Activated CD4-positive, alpha-beta memory T cell treated with anti-CD3 and anti-CD28 coated beads, Interleukin-2, amount 10 ng/mL, durations not matched to agents 7 days and 5 days (primary cell): ENCODE measurements at regions of chr16 and their contacts with region 1.

Region 1: DNA sequence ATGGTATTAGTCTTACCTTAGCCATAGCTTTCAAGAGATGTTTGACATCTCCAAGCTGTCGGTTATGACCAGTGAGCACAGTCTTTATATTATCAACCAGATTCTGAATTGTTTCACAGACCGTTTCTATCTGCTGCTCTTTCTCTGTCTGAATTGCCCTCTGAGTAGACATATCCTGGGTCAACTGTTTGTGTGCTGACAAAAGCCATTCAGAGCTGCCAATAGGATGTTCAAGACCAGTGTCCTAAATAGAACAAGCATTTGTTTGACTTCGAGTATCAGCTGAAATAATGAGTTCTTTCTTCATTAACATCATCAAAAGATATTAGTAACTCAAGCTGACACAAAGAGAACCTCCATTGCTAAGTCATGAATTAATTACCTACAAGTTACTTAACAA is 14.9 kb upstream of the ARL6IP1 start:
- DNase-seq: no peak
- H3K4me3 Mint-ChIP-seq: no peak overlapping the region
- H3K27ac Mint-ChIP-seq: no peak overlapping the region
- H3K4me1 Mint-ChIP-seq: peaks cover 15% of the 10 kb centered on the region
- H3K27me3 Mint-ChIP-seq: no peaks in the 10 kb centered on the region

Region 2: GRCh38 chr16:18829251-18829650 is 13.0 kb after region 1 on chr16:
- CTCF ChIA-PET with region 1: no interaction called
- POLR2A ChIA-PET with region 1: interaction called, 19 read pairs
- DNase-seq: no peak
- H3K4me3 Mint-ChIP-seq: no peak overlapping the region
- H3K27ac Mint-ChIP-seq: no peak overlapping the region
- H3K4me1 Mint-ChIP-seq: peaks cover 4% of the 10 kb centered on the region
- H3K27me3 Mint-ChIP-seq: no peaks in the 10 kb centered on the region

Region 3: DNA sequence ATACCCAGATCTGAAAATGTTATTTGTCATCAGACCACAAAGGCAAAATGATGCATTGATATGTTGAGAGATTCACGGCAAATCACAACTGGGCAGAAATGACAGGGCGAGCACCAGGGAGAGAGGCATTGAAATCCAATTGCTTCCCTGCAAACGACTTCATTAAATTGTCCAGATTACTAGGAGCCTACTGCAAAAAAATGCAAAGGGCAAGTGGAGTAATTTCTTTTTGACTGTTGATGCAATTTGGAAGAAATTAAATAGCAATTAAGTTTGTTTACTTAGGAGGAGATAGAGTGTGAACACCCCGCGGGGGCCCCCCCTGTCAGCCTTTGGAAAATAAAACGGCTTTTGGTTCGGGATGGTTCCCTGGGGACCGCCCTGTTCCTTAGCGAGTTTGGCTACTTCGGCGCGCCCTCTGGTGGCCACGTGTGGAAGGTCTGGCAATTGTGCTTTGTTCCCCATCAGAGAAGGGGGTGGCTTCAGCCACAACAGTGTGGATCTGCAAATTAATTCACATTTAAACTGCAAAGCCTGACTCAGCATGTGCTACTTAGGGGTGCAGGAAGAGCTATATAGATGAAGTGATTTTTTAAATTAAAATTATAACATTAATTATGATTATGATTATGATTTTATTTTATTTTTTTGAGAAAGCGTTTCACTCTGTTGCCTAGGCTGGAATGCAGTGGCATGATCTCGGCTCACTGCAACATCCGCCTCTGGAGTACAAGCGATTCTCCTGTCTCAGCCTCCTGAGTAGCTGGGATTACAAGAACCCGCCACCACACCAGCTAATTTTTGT is 153.0 kb after region 1 on chr16:
- CTCF ChIA-PET with region 1: interaction called, 11 read pairs
- POLR2A ChIA-PET with region 1: no interaction called
- DNase-seq: peak; percentile 82
- H3K4me3 Mint-ChIP-seq: peak overlapping the region; percentile 21
- H3K27ac Mint-ChIP-seq: no peak overlapping the region
- H3K4me1 Mint-ChIP-seq: peaks cover 5% of the 10 kb centered on the region
- H3K27me3 Mint-ChIP-seq: peaks cover 2% of the 10 kb centered on the region

Region 4: GRCh38 chr16:19130852-19131810 is 314.8 kb after region 1 on chr16:
- CTCF ChIA-PET with region 1: no interaction called
- POLR2A ChIA-PET with region 1: no interaction called
- DNase-seq: no peak
- H3K4me3 Mint-ChIP-seq: no peak overlapping the region
- H3K27ac Mint-ChIP-seq: peak overlapping the region; percentile 38
- H3K4me1 Mint-ChIP-seq: peaks cover 51% of the 10 kb centered on the region
- H3K27me3 Mint-ChIP-seq: no peaks in the 10 kb centered on the region